RWPE1 (cell line): ENCODE measurements at regions of chr2 and their contacts with region 1.

Region 1: DNA sequence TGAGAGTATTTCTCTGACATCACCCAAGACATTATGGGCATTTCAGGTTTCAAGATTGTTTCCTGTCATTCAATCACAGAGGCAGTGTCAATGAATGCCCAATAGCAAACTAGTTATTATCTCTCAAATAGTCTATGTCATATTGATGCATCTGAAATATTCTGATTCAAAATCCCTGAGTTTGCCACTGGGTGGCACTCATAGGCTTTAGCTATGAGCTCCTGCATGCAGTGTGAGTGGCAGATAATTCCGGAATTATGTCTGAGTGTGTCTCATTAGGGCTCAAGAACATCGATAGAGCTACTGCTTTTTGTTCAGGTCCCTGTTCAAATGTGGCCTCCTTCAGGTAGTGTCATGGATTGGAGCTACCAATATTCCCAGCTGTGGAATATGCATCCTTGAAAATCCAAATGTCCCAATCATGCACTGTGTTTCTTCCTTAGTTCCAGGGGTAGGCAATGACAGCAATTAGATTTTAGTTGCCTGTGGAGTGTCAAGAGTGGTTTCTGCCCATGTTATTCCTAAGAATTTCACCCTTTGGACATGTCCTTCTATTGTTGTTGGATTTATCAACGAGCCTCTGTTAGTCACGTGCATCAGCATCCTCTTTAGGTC is 7.8 kb upstream of the OR6B3 start:
- DNase-seq: peak; percentile 48
- H3K27ac ChIP-seq: no peak overlapping the region
- CTCF ChIP-seq: peak; percentile 75

Region 2: GRCh38 chr2:240143801-240144648 is 82.9 kb after region 1 on chr2:
- CTCF ChIA-PET with region 1: interaction called, 67 read pairs
- POLR2A ChIA-PET with region 1: no interaction called
- DNase-seq: peak; percentile 74
- H3K27ac ChIP-seq: no peak overlapping the region
- CTCF ChIP-seq: peak; percentile 91